Right lobe of liver (tissue), 6 donors: ENCODE measurements at regions of chr12 and their contacts with region 1.

Region 1: GRCh38 chr12:3275171-3276041 is 198.2 kb downstream of the TSPAN9 start:
- DNase-seq: peak; percentile 74 to 81 (median 76)
- ATAC-seq: peak; percentile 70 to 87 (median 80)
- H3K4me3 ChIP-seq: no peak overlapping the region
- H3K27ac ChIP-seq: no peak overlapping the region
- H3K4me1 ChIP-seq: no peaks in the 10 kb centered on the region
- H3K27me3 ChIP-seq: no peaks in the 10 kb centered on the region
- CTCF ChIP-seq: peak; percentile 92 to 99 (median 98)
- POLR2A ChIP-seq: no peak

Region 2: GRCh38 chr12:3073438-3074250 is 201.8 kb before region 1 on chr12:
- intact Hi-C with region 1: loop called (anchors 5 to 10 kb)
- DNase-seq: peak; percentile 82 to 87 (median 82)
- ATAC-seq: peak; percentile 50 to 59 (median 52)
- H3K4me3 ChIP-seq: no peak overlapping the region
- H3K27ac ChIP-seq: no peak overlapping the region
- H3K4me1 ChIP-seq: peaks cover 0 to 6% (median 2%) of the 10 kb centered on the region in 4 donors
- H3K27me3 ChIP-seq: no peaks in the 10 kb centered on the region
- CTCF ChIP-seq: peak; percentile 92 to 99 (median 98)
- POLR2A ChIP-seq: no peak

Region 3: GRCh38 chr12:3135522-3136461 is 139.6 kb before region 1 on chr12:
- intact Hi-C with region 1: loop called (anchors 5 kb)
- DNase-seq: no peak
- ATAC-seq: peak; percentile 71 to 78 (median 74)
- H3K4me3 ChIP-seq: no peak overlapping the region
- H3K27ac ChIP-seq: no peak overlapping the region
- H3K4me1 ChIP-seq: peaks cover 0 to 29% (median 6%) of the 10 kb centered on the region in 4 donors
- H3K27me3 ChIP-seq: no peaks in the 10 kb centered on the region
- CTCF ChIP-seq: peak; percentile 67 to 80 (median 74)
- POLR2A ChIP-seq: no peak

Region 4: DNA sequence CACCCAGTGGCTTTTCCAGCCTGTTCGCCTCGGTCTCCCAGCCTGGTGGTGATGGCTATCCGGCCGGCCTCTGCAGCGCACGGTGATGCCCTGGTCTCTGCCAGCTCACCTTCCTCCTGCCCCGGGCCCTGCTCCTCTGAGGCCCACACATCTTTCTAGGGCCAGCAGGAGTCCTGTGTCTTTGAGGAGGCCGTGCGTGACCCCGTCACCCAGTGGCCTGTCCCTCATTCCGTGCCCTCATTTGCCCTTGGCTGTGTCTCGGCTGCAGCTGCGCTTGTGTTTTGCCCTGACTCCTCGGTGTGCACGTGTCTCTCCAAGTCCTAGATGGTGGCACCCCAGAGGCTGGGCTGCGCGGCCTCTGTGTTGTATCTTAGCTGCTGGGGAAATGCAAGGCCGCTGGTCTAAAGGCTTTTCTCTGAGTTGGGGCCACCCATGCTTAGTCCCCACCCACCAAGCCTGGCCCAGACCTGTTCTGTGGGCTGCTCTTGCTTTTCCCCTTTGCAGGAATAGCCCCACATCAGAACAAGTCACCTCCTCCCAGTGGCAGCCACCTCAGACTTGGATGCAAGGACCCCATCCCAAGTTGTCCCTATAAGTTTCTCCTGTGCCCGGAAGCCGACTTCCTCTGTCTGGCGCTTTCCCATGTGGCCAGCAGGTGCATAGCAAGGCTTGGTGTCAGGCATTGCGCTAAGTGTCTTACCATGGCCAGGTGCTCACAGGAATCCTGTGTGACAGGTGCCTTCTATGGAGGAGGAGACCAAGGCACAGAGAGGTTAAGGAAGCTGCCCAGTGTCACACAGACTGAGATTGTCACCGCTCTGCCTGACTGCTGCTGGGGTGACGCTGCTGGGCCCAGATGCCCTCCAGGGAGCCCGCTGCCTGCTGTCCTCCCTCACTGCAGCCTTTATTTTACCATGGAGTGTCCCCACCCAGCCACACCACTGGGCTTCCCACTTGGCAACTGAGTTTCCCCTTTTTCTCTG is 133.8 kb before region 1 on chr12:
- intact Hi-C with region 1: loop called (anchors 5 kb)
- DNase-seq: no peak
- ATAC-seq: peak in 1 of 4 donors; percentile 3
- H3K4me3 ChIP-seq: no peak overlapping the region
- H3K27ac ChIP-seq: no peak overlapping the region
- H3K4me1 ChIP-seq: peaks cover 0 to 14% (median 0%) of the 10 kb centered on the region in 4 donors
- H3K27me3 ChIP-seq: no peaks in the 10 kb centered on the region
- CTCF ChIP-seq: no peak
- POLR2A ChIP-seq: no peak

Region 5: DNA sequence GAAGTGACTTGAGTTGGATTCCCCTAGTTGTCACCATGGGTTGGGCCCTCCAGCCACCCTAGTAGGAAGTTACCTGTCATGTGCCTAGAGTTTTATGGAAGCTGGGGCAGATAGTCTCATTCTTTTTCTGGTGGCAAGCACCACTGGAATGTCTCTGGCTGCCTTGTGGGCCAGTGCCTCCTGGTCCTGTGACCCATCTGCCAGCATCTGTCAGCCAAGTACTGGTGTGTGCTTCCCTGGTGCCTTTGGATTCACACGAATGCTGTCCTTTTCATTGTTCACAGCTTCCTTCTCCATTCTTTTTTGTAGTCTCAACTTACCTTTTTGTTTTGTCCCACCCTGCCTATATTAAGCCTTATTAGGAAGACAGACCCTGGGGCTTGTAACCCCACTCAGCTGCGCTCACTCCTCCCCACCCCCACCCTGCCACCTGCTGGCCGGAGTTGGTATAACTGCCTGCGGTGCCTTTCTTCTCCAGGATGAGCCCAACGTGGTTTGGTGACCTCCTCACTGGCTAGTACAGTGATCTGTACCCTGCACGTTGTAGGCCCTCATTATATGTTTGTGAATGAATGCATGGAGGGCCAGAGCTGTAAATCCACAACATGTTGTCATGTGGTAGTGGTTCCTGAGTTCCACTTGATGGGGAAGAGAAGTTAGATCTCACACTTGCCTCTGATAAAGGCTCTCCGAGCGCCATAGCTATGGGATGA is 72.5 kb before region 1 on chr12:
- intact Hi-C with region 1: loop called in 1 of 2 experiments (anchors 10 kb)
- DNase-seq: peak in 2 of 3 donors; percentile 50 to 65
- ATAC-seq: peak; percentile 70 to 85 (median 80)
- H3K4me3 ChIP-seq: no peak overlapping the region
- H3K27ac ChIP-seq: no peak overlapping the region
- H3K4me1 ChIP-seq: no peaks in the 10 kb centered on the region
- H3K27me3 ChIP-seq: no peaks in the 10 kb centered on the region
- CTCF ChIP-seq: peak; percentile 81 to 90 (median 86)
- POLR2A ChIP-seq: no peak